ENCODE measurements at regions of chr5 and their contacts with region 1.

Region 1: DNA sequence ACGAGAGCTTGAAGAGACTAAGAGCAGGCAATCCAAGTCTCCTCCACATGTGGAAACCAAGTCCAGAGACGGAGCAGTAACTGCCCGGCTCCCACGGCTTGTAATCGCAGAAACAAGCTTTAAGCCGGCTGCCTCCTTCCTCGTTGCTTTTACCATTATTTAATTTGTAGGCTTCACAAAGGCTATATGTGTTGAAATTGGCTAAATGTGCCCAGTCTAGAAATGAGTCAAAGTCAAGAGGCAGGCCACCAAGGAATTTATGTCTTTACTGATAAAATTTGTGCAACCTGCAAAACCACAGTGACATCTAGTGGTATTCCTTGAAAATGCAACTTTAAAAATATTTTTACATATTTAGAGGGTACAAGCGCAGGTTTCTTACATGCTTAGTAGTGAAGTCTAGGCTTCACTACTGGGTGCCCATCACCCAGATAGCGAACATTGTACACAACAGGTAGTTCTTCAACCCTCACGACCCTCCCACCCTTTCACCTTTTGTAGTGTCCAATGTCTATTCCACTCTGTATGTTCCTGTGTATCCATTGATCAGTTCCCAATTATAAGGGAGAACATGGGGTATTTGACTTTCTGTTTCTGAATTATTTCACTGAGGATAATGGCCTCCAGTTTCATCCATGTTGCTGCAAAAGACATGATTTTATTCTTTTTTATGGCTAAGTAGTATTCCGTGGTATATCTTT is 33.5 kb upstream of the EBF1 start:
- DNase-seq: peak in 1 of 2 experiments; percentile 42
- H3K4me3 ChIP-seq: no peak overlapping the region
- H3K4me3 Mint-ChIP-seq: no peak overlapping the region
- H3K27ac Mint-ChIP-seq: no peak overlapping the region
- H3K4me1 ChIP-seq: no peaks in the 10 kb centered on the region
- H3K4me1 Mint-ChIP-seq: no peaks in the 10 kb centered on the region
- H3K27me3 ChIP-seq: no peaks in the 10 kb centered on the region
- H3K27me3 Mint-ChIP-seq: peaks cover 12% of the 10 kb centered on the region
- CTCF ChIP-seq: peak; percentile 74 to 77

Region 2: GRCh38 chr5:157761690-157762621 is 1371.2 kb before region 1 on chr5:
- CTCF ChIA-PET with region 1: no interaction called
- POLR2A ChIA-PET with region 1: no interaction called
- intact Hi-C with region 1: loop called (anchors 10 kb)
- DNase-seq: peak; percentile 44 to 53
- H3K4me3 ChIP-seq: no peak overlapping the region
- H3K4me3 Mint-ChIP-seq: no peak overlapping the region
- H3K27ac Mint-ChIP-seq: no peak overlapping the region
- H3K4me1 ChIP-seq: no peaks in the 10 kb centered on the region
- H3K4me1 Mint-ChIP-seq: no peaks in the 10 kb centered on the region
- H3K27me3 ChIP-seq: no peaks in the 10 kb centered on the region
- H3K27me3 Mint-ChIP-seq: no peaks in the 10 kb centered on the region
- CTCF ChIP-seq: peak; percentile 70 to 80

Region 3: DNA sequence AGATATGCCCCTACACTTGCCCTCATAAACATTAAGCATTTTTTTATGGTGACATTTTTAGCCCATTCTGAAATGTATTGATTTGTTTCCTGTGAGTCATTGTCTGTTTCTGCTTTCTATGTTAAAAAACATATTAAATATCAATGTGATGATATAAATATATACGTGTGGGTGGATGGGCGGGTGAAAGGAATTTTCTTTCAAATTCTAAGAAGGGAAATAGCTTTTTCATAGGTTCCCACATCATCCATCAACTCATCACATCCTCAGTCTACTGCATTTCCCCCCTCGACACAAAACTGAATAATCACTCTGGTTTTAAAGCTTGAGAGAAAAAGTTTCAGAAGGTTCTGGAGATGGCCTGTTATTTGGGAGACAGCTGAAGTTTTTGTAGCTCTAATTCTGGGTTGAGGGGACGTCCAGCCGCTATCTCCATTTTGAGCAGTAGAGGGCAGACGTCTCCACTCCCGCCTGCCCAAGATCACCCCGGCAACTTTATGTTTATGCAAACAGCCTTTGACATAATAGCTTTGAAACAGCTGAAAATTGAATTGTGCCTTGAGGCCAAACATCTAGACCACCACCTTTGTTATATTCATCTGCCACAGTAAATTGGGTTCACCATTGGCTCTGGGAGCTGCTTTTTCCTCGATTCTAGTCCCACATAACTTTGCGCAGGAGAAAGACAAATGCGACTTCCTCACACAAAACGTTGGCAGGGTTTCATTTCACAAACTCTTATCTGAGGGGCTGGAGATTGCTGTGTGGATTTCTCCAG is 1058.0 kb before region 1 on chr5:
- CTCF ChIA-PET with region 1: no interaction called
- POLR2A ChIA-PET with region 1: no interaction called
- intact Hi-C with region 1: loop called (anchors 1 kb)
- DNase-seq: peak; percentile 41 to 75
- H3K4me3 ChIP-seq: no peak overlapping the region
- H3K4me3 Mint-ChIP-seq: no peak overlapping the region
- H3K27ac Mint-ChIP-seq: no peak overlapping the region
- H3K4me1 ChIP-seq: no peaks in the 10 kb centered on the region
- H3K4me1 Mint-ChIP-seq: no peaks in the 10 kb centered on the region
- H3K27me3 ChIP-seq: no peaks in the 10 kb centered on the region
- H3K27me3 Mint-ChIP-seq: peaks cover 9% of the 10 kb centered on the region
- CTCF ChIP-seq: peak; percentile 73 to 87

Region 4: GRCh38 chr5:158174918-158175851 is 958.0 kb before region 1 on chr5:
- CTCF ChIA-PET with region 1: interaction called, 3 read pairs
- POLR2A ChIA-PET with region 1: no interaction called
- intact Hi-C with region 1: loop called (anchors 1 kb)
- DNase-seq: peak; percentile 67 to 69
- H3K4me3 ChIP-seq: no peak overlapping the region
- H3K4me3 Mint-ChIP-seq: no peak overlapping the region
- H3K27ac Mint-ChIP-seq: no peak overlapping the region
- H3K4me1 ChIP-seq: peaks cover 11% of the 10 kb centered on the region; the same call in 1 of the 2 replicates
- H3K4me1 Mint-ChIP-seq: no peaks in the 10 kb centered on the region
- H3K27me3 ChIP-seq: no peaks in the 10 kb centered on the region
- H3K27me3 Mint-ChIP-seq: peaks cover 7% of the 10 kb centered on the region
- CTCF ChIP-seq: peak; percentile 74 to 87

Region 5: GRCh38 chr5:159257629-159258283 is 124.6 kb after region 1 on chr5:
- CTCF ChIA-PET with region 1: no interaction called
- POLR2A ChIA-PET with region 1: no interaction called
- intact Hi-C with region 1: no loop called
- DNase-seq: peak in 1 of 2 experiments; percentile 26
- H3K4me3 ChIP-seq: no peak overlapping the region
- H3K4me3 Mint-ChIP-seq: no peak overlapping the region
- H3K27ac Mint-ChIP-seq: no peak overlapping the region
- H3K4me1 ChIP-seq: peaks cover 6% of the 10 kb centered on the region; the same call in 1 of the 2 replicates
- H3K4me1 Mint-ChIP-seq: peaks cover 6% of the 10 kb centered on the region
- H3K27me3 ChIP-seq: peaks cover 1% of the 10 kb centered on the region
- H3K27me3 Mint-ChIP-seq: peaks cover 14% of the 10 kb centered on the region
- CTCF ChIP-seq: no peak

Region 6: DNA sequence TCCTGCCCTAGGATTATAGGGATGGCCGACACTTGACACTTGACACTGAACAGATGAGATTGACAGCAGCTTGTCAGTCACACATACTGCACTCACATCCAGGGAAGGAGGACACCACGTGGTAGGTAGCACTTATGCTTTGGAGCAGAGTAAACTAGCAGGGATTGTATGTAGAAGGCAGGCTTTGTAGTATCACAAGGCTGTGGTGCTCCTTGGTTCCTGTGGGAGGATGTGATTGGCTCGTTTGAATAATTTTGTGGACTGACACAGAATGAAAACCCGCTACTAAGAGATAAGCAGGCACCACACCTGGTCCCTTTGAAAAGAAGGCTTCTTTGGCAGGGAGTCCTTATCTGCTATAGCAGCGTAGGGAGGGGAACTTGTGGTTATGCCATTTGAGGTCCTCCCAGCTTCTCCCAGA is 260.7 kb after region 1 on chr5:
- CTCF ChIA-PET with region 1: no interaction called
- POLR2A ChIA-PET with region 1: no interaction called
- intact Hi-C with region 1: no loop called
- DNase-seq: no peak
- H3K4me3 ChIP-seq: no peak overlapping the region
- H3K4me3 Mint-ChIP-seq: no peak overlapping the region
- H3K27ac Mint-ChIP-seq: no peak overlapping the region
- H3K4me1 ChIP-seq: peaks cover 4% of the 10 kb centered on the region
- H3K4me1 Mint-ChIP-seq: peaks cover 4% of the 10 kb centered on the region
- H3K27me3 ChIP-seq: no peaks in the 10 kb centered on the region
- H3K27me3 Mint-ChIP-seq: peaks cover 17% of the 10 kb centered on the region
- CTCF ChIP-seq: no peak

Measured in Caco-2 (cell line).